ENCODE measurements at regions of chr6 and their contacts with region 1.

Region 1: DNA sequence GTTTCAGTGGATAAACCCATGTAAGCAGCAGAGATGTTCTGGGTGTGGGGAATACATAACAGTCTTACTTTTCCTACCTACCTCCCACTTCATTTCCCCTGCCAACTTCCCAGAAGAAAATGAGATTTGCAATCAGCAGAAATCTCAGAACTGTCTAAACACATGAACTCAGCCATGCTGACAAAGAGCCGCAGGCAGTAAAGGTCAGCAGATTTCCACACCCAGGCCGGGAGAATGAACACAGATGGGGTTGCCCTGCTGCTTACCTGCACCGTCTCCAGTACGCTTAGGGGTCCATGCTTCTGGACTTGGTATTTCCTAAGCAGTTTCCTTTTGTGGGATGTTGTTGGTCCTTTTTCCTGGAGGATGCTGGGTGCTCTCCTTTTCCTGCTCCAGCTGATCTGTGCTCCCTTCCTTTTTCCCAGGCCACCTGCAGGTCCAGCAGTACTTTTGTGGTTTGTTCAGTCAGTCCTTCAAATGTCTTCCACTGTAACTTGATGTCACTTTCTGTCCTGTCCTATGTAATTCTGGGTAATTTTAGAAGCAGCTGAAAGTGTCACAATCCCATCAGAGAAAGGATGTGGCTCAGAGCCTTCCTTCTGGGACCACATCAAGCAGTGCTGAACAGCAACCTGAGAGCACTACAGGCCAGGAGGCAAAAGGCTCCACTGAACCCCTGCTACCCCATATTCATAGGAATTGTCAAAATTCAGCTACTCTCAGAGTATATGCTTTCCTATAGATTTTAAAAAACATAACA is 129.0 kb downstream of the CEP57L1 start:
- DNase-seq: no peak
- H3K4me3 ChIP-seq: no peak overlapping the region
- H3K27ac ChIP-seq: no peak overlapping the region
- H3K4me1 ChIP-seq: peaks cover 0 to 15% of the 10 kb centered on the region in 2 donors
- H3K27me3 ChIP-seq: no peaks in the 10 kb centered on the region
- CTCF ChIP-seq: no peak

Region 2: GRCh38 chr6:109236115-109237076 is 12.1 kb after region 1 on chr6:
- intact Hi-C with region 1: loop called (anchors 2 kb)
- DNase-seq: no peak
- H3K4me3 ChIP-seq: no peak overlapping the region
- H3K27ac ChIP-seq: no peak overlapping the region
- H3K4me1 ChIP-seq: peaks cover 4 to 7% of the 10 kb centered on the region in 2 donors
- H3K27me3 ChIP-seq: no peaks in the 10 kb centered on the region
- CTCF ChIP-seq: no peak

Region 3: DNA sequence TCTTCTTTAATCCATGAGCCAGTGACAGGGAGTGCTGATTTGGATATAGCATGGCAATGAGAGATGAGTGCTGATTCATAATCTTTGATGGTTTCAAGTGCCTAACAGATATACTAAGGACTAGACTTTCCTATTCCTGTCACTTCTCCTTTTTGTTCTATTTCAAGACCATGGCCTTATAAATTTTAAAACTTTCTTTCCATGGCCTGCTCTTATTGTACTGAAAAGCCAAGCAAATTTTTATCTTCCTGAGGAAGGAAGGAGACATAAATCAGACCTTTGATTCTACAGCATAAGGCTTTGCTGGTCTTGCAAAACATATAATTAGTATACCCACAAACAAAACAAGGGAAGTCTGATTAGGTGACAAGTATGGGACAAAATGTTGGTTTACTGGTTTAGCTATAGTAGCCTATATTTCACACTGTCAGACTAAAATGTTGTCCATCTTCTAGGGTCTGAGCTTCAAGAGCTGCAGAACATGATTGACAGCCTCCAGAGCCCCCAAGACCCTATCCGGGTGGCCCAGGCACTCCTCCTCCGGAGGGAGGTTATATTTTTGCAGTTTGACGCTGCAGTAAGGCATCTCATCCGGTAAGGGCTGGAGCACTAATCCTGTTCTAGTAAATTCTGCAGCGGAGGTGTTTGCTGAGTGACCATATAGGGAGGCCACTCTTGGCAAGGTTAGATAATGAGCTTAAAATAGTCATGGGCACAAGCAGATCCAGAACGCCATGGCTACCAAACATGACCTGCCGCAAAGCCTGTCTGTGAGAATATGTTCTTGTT is 75.7 kb after region 1 on chr6:
- intact Hi-C with region 1: loop called (anchors 5 kb)
- DNase-seq: peak; percentile 28 to 88
- H3K4me3 ChIP-seq: no peak overlapping the region
- H3K27ac ChIP-seq: peak overlapping the region; percentile 79 to 80
- H3K4me1 ChIP-seq: peaks cover 8 to 61% of the 10 kb centered on the region in 2 donors
- H3K27me3 ChIP-seq: no peaks in the 10 kb centered on the region
- CTCF ChIP-seq: no peak

Region 4: DNA sequence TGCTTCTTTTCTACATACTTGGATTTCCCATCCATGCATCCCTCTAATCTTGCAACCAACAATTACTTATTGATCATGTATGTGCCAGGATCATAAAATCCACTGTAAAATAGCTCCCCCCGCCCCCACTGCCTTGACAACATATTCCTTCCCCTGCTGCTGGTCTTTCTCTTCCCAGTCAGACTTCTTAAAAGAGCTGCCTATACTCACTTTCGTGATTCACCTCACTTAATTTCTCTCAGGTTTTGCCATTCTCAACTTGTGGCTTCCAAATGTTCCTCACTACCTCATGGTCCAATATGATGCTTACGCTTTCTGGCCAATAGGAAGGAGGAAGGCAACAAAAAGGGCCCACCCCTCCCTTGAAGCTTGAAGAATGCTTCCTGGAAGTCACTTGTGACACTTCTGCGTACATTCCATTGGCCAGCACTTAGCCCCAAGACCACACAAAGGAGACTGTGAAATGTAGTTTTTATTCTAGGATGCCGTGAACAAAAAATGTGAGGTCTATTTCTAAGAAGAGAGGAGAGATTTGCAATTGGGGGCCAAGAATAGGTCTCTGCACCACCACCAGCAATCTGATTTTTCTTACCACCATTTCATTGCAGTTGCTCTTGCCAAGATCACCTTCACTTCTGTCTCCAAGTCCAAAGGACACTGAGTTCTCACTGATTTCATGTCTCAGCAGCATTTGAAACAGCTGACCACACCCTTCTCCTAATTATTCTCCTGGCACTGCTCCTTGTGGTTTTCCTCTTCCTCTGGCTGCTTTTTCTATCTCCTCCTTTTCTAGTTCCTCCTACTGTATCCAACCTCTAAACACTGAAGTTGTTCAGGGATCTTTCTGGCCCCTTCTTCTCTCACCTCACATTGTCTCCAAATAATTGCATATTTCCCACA is 127.2 kb after region 1 on chr6:
- intact Hi-C with region 1: no loop called
- DNase-seq: no peak
- H3K4me3 ChIP-seq: no peak overlapping the region
- H3K27ac ChIP-seq: no peak overlapping the region
- H3K4me1 ChIP-seq: peaks cover 0 to 4% of the 10 kb centered on the region in 2 donors
- H3K27me3 ChIP-seq: no peaks in the 10 kb centered on the region
- CTCF ChIP-seq: no peak